GM13977 (cell line): ENCODE measurements at regions of chr2 and their contacts with region 1.

Region 1: GRCh38 chr2:177148477-177149154 is 64.0 kb upstream of the HNRNPA3 start:
- DNase-seq: peak; percentile 50
- CTCF ChIP-seq: peak; percentile 90

Region 2: DNA sequence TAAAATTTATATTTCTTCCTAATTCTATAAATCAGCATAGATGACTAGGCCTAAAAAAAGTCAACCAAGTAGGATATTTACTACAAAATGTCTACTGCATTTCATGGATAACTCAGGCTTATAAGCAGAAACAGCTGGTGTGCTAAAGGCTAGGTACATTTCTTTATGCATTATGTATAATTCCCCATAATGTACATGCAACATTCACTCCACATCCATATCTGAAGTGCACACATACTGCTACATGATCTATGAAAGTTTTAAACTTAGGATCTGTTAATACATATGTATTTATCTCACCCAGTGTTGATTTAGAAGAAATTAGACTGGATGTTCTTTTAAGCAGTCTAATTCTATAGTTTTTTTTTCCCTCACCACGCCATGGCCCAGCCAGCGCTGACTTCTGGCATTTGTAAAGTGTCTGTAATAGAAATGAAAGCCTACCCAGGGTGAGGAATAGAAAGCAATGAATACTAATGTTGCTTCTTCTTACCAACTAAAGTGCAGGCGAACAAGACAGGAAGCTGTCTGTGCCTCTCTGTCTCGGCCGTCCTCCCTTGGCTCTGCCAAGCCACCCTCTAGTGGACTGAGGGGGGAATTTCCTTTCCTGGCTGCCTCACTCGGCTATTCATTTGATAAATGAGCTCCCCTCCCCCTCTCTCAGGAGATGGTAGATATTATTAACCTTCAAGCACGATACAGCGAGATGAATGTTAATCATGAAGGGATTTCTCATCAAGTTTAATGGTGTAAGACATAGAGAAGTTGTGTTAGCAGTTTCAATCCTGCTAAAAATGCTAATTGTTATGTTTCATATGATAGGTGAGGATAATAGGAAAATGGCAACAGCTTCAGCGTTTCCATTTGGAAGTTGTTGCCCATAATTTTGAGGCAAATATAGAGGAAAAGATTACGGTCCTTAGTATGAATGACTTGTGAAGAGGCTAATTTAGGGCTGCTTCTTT is 494.9 kb before region 1 on chr2:
- in situ Hi-C with region 1: loop called (anchors 10 kb)
- DNase-seq: no peak
- CTCF ChIP-seq: peak; percentile 53

Region 3: GRCh38 chr2:176814306-176815052 is 334.1 kb before region 1 on chr2:
- in situ Hi-C with region 1: loop called (anchors 25 kb)
- DNase-seq: peak; percentile 56
- CTCF ChIP-seq: peak; percentile 53